Dendritic cell treated with granulocyte-macrophage colony-stimulating factor and Interleukin-4, amounts not matched to agents 40 ng/mL and 50 ng/mL, for 4 days (primary cell): ENCODE measurements at regions of chr12 and their contacts with region 1.

Region 1: GRCh38 chr12:47715393-47715876 is 9.6 kb upstream of the RPAP3 start:
- H3K4me3 Mint-ChIP-seq: peak overlapping the region; percentile 26
- H3K27ac Mint-ChIP-seq: peak overlapping the region; percentile 68
- H3K4me1 Mint-ChIP-seq: peaks cover 76% of the 10 kb centered on the region
- H3K27me3 Mint-ChIP-seq: peaks cover 4% of the 10 kb centered on the region

Region 2: DNA sequence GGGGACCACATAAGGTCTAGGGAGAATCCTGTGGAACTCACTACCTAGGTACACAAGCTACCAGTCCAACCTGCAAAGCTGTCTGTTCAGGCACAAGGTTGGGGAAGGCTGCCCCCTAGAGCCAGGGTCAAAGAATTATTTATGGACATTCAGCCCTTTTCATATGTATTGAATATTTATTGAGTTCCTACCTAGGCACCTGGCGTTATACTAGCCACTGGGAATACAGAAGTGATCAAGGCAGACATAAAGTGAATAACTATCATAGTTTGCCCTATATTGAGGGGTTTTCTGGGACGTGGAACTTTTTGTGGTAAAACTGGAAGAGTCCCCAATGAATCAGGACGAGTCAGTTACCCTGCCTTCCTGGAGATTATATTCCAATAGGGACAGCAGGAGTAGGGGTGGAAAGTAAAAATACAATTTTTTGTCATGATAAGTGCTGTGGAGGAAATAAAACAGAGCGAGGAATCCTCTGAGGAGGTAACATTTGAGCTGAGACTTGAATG is 51.8 kb after region 1 on chr12:
- intact Hi-C with region 1: loop called (anchors 1 kb)
- H3K4me3 Mint-ChIP-seq: no peak overlapping the region
- H3K27ac Mint-ChIP-seq: no peak overlapping the region
- H3K4me1 Mint-ChIP-seq: peaks cover 12% of the 10 kb centered on the region
- H3K27me3 Mint-ChIP-seq: peaks cover 6% of the 10 kb centered on the region

Region 3: DNA sequence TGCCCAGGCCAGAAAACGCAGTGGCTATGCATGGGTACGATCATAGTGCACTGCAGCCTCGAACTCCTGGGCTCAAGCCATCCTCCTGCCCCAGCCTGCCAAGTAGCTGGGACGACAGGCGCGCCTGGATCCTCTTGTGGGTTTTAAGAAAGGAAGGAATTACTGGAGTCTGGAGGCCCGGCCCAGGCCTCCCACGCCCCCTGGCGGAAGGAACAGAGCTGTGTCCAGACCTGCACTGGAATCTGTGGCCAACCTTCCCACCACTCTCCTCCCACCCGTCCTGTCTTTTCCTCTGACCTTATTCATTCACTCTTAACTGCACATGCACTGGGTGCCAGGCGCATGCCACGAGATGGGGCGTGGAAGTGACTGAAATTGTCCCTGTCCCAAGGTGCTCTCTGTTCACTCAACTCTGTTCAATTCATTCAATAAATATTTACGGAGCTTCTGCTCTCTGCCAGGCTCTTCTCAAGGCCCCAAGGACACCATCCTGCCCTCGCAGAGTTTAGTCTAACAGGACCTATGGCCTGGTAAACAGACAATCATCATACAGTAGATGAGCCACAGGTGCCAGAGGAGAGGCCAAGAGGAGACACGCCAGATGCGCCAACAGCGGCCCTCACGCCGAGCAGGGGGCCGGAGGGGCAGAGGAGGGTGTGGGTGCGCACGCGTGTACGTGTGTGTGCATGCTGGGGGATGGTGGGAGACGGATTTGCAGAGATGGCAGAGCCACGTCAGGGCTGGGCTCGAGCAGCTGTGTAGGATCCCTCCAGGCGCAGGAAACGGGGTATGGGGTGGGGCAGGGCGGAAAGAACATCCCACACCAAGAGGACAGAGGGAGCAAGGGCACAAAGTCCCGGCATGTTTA is 234.2 kb after region 1 on chr12:
- intact Hi-C with region 1: loop called (anchors 10 kb)
- H3K4me3 Mint-ChIP-seq: no peak overlapping the region
- H3K27ac Mint-ChIP-seq: peak overlapping the region; percentile 49
- H3K4me1 Mint-ChIP-seq: peaks cover 27% of the 10 kb centered on the region
- H3K27me3 Mint-ChIP-seq: peaks cover 12% of the 10 kb centered on the region